ENCODE measurements at regions of chr20 and their contacts with region 1.

Region 1: GRCh38 chr20:9989066-9989724 is 45.6 kb upstream of the ANKEF1 start:
- DNase-seq: no peak
- H3K4me3 ChIP-seq: no peak overlapping the region
- H3K27ac ChIP-seq: no peak overlapping the region
- H3K4me1 ChIP-seq: no peaks in the 10 kb centered on the region
- H3K27me3 ChIP-seq: no peaks in the 10 kb centered on the region
- CTCF ChIP-seq: no peak

Region 2: GRCh38 chr20:9458138-9458796 is 530.9 kb before region 1 on chr20:
- CTCF ChIA-PET with region 1: no interaction called
- POLR2A ChIA-PET with region 1: interaction called, 13 read pairs
- intact Hi-C with region 1: no loop called
- DNase-seq: no peak
- H3K4me3 ChIP-seq: no peak overlapping the region
- H3K27ac ChIP-seq: no peak overlapping the region
- H3K4me1 ChIP-seq: no peaks in the 10 kb centered on the region
- H3K27me3 ChIP-seq: no peaks in the 10 kb centered on the region
- CTCF ChIP-seq: no peak; the same call in 1 of the 2 replicates